GM10248 (cell line): ENCODE measurements at regions of chr11 and their contacts with region 1.

Region 1: DNA sequence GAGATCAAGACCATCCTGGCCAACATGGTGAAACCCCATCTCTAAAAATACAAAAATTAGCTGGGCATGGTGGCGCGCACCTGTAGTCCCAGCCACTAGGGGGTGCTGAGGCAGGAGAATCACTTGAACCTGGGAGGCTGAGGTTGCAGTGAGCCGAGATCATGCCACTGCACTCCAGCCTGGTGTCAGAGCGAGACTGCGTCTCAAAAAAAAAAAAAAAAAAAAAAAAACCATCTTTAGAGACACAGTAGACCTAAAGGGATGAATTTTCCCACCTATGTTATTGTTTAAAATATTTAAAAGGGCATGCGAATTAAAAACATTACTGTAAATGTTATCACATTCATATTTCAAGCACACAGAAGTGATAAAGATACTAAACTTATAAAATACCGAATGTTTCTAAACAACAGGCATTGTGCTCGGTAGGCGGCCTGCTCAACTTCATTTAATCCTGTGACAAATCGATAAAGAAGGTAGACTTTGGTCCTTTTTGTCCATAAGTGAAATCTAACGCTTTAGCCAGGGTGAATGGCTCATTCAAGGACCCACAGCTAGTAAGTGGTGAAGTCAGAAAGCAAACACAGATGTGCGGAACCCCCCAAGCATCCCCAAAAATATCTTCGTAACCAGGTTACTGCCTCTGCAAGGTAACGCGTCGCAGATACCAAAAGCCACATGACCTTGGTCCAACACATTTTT is 16.1 kb downstream of the NCAPD3 start:
- DNase-seq: no peak
- CTCF ChIP-seq: peak; percentile 76

Region 2: DNA sequence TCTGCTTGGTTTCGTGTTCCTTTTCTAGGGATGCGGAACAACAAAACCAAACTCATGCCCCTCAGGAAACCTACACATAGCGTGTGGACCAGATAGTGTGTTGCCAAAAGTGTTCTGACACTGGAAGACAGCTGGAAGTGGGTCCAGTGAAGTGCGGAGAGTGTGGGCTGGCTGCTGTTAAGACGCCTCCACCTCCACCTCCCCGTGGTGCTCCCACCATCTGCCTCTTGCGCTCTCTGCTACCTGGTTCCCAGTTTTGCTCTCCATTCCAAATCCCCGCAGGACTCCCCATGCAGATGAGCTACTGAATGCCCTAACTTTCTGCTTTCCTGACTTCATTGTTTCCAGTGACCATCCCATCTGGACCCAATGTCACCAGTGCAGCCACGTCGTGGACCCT is 35.7 kb before region 1 on chr11:
- CTCF ChIA-PET with region 1: no interaction called
- POLR2A ChIA-PET with region 1: no interaction called
- DNase-seq: no peak
- CTCF ChIP-seq: no peak

Region 3: DNA sequence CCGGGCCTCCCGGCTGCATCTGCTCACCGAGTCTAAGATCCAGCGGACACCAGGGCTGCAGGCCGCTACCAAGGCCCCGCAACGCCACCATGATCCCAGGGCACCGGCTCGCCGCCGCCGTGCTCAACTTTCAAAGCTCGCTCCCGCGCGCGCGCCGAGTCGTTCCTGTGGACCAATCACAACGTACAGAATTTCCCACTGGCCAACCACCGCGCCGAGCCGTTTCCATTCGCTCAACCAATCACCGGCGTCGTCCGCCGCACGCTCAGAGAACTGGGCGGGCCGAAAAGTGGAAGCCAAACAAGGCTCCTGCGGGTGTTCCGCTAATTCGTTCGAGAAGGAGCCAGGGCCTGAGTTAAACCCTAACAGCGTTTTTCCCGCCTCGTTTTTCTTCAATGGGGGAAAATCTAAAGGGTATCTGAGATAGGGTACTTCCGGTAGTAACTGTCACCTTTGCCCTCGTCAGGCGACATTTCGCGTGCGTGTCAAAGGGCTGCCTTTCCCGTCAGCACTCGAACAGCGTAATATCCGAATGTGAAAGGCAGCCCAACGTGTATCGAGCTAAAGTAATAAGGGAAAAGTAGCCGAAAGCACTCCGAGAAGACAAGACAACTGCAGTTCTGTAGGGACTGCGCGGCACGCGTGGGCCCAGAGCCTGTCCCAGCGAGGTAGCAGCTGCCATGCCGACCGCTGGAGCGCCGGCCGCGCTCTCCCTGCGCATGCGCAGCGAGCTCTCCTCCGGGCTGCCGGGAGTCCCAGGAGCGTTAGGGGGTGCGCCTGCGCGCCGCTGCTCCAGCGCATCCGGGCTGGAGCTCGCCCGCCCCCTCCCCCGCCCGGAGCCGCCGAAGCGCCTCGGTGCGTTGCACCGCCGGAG is 16.4 kb after region 1 on chr11 and contains the starts of genes NCAPD3 and VPS26B:
- CTCF ChIA-PET with region 1: interaction called, 12 read pairs
- POLR2A ChIA-PET with region 1: no interaction called
- DNase-seq: peak; percentile 97
- CTCF ChIP-seq: no peak

Region 4: DNA sequence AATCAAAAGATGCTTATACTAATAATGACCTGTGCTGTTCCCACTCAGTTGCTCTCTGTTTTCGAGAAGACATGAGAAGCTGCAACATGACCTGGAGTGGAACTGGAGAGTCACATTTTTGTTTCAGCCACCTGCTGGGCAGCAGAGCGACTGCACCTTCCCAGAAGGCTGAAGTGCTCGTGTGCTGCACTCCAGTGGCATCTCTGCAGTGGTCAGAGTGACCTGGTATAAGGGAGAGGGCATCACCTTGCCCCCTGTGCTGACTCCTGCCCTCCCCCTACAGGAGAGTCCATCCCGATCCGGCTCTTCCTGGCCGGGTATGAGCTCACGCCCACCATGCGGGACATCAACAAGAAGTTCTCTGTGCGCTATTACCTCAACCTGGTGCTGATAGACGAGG is 37.0 kb after region 1 on chr11:
- CTCF ChIA-PET with region 1: interaction called, 12 read pairs
- POLR2A ChIA-PET with region 1: no interaction called
- DNase-seq: peak; percentile 57
- CTCF ChIP-seq: peak; percentile 65

Region 5: DNA sequence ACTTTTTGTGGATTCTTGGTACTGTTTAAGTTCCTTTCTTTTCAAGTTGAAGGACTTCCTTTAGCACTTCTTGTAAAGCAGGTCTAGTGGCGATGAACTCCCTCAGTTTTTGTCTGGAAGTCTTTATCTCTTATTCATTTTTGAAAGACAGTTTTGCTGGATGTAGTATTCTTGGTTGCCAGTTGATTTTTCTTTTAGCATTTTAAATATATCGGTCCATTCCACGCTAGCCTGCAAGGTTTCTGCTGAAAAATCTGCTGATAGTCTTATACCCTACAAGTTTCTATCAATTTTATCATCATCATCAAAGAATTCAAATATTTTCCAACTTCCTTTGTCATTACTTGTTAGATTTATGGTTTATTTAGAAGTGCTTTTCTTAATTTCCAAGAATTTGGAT is 109.4 kb after region 1 on chr11:
- CTCF ChIA-PET with region 1: no interaction called
- POLR2A ChIA-PET with region 1: no interaction called
- DNase-seq: no peak
- CTCF ChIP-seq: no peak